GM10248 (cell line): ENCODE measurements at regions of chr2 and their contacts with region 1.

Region 1: DNA sequence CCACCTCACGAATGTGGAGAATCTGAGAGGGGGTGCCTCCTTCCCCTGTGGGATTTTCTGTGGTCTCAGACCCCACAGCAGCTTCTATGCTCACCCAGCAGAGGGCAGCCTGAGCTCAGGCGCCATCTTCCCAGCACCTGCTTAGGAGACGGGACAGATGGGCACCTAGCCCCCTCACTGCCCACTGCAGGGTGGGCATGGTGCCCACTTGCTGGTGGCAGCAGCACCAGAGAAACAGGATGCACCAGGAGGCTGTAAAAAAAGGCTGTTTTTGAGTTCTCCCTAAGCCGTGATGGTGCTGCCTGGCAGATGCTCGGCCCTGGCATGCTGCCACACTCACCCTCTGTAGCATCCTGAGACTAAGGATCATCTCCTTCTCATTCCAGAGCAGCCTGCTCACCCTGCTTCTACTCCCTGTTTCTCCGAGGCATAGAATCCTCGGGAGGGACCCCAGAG is 19.1 kb upstream of the SLC20A1 start:
- DNase-seq: peak; percentile 70
- CTCF ChIP-seq: peak; percentile 93

Region 2: DNA sequence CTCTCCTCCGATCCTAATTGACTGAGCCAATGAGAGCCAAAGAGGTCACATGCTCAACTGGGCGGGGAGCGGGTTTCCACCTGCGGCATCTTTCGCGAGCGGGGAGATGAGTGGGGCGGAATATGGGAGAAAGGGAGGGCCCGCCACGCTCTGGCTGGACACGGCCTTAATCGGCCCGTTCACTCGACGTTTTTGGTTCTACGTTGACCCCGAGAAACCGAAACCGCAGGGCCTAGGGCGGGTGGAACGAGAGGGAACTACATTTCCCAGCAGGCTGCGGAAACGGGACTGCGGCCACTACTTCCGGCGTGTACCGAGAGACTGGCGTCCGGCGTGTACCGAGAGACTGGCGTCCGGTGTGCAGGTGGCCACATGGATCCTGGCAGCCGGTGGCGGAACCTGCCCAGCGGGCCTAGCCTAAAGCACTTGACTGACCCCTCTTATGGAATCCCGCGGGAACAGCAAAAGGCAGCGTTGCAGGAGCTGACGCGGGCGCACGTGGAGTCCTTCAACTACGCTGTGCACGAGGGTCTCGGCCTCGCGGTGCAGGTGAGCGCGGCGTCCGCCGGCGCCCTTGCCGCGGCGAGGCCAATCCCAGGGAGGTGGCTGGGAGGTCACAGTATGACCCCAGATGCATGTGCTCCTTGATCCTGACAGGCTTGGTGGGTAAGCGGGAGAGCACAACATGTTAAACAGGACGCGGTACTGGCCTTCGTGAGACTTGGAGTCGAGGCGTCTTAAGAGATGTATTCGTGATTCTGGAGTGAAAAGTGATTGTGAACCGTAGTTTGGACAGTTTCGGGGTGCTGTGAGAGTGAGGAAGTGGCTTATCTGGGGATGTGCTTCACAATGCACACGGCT is 84.3 kb before region 1 on chr2 and contains the start of gene POLR1B:
- CTCF ChIA-PET with region 1: no interaction called
- POLR2A ChIA-PET with region 1: no interaction called
- DNase-seq: peak; percentile 90
- CTCF ChIP-seq: peak; percentile 8

Region 3: GRCh38 chr2:112645310-112646101 is 18.9 kb after region 1 on chr2 and contains the start of gene SLC20A1:
- CTCF ChIA-PET with region 1: interaction called, 136 read pairs
- POLR2A ChIA-PET with region 1: interaction called, 25 read pairs
- DNase-seq: peak; percentile 100
- CTCF ChIP-seq: peak; percentile 58

Region 4: DNA sequence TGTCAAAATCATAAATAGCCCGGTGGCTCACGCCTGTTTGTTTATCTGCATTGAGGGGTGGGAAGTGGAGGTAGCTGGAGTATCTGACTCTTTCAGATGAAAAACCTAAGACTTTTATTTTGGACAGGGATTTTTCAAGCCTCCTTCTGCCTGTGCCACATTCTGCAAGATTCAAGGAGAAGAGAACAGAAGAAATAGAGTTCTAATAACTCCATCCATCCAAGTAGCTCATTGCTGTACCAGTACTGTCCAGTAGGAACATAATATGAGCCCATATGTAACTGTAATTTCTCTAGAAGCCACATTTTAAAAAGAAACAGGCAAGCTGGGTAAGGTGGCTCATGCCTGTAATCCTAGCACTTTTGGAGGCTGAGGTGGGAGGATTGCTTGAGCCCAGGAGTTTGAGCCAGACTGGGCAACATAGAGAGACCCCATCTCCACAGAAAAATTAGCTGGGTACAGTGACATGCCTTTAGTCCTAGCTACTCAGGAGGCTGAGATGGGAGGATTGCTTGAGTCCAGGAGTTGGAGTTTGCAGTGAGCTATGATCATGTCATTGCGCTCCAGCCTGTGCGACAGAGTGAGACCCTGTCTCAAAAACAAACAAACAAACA is 58.7 kb after region 1 on chr2:
- CTCF ChIA-PET with region 1: interaction called, 43 read pairs
- POLR2A ChIA-PET with region 1: no interaction called
- DNase-seq: no peak
- CTCF ChIP-seq: no peak

Region 5: GRCh38 chr2:112706170-112706664 is 79.6 kb after region 1 on chr2:
- CTCF ChIA-PET with region 1: interaction called, 24 read pairs
- POLR2A ChIA-PET with region 1: no interaction called
- DNase-seq: no peak
- CTCF ChIP-seq: no peak

Region 6: DNA sequence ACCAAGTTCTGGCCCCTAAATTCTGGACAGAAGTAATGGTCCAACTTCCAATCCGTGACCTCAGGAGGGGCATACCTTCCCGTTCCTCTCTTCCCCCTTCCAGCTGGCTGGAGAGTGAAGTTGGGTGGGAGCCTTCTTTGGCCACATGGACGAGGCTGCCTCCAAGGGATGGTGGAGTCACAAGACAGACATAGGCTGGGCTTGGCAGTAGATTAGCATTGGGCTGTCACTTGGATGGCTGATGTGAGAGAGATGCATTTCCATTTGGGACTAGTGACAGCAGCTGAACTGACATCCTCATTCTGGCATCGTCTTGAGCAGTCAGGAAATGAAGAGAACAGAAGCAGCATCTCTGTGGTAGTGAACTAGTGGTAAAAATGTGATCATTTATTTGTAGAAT is 106.8 kb after region 1 on chr2:
- CTCF ChIA-PET with region 1: interaction called, 416 read pairs
- POLR2A ChIA-PET with region 1: no interaction called
- DNase-seq: no peak
- CTCF ChIP-seq: no peak